ENCODE measurements at regions of chr2 and their contacts with region 1.

Region 1: DNA sequence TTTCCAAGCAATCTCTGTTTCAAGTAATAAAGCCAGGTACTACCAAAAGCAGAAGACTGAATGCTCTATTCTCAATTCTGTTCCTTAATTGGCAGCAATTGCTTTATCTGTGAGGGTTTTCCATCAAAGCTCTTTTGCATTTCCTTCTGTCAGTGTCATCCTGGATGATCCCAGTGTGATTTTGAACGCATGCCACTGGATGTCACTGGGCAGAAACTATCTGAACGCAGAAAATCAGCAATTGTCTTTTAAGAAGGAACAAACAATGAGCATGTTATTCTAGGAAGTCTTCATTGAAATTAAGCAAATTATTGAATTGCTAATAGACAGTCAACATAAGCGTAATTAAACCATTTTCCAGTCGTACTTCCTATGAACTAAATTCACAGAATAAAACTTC is 259.0 kb upstream of the REG3G start:
- DNase-seq: no peak
- H3K4me3 ChIP-seq: no peak overlapping the region
- H3K27ac ChIP-seq: no peak overlapping the region
- H3K4me1 ChIP-seq: no peaks in the 10 kb centered on the region
- H3K27me3 ChIP-seq: no peaks in the 10 kb centered on the region
- CTCF ChIP-seq: no peak

Region 2: GRCh38 chr2:78832481-78832880 is 66.0 kb after region 1 on chr2:
- CTCF ChIA-PET with region 1: no interaction called
- POLR2A ChIA-PET with region 1: no interaction called
- intact Hi-C with region 1: loop called (anchors 2 kb)
- DNase-seq: no peak
- H3K4me3 ChIP-seq: no peak overlapping the region
- H3K27ac ChIP-seq: no peak overlapping the region
- H3K4me1 ChIP-seq: no peaks in the 10 kb centered on the region
- H3K27me3 ChIP-seq: no peaks in the 10 kb centered on the region
- CTCF ChIP-seq: no peak

Region 3: DNA sequence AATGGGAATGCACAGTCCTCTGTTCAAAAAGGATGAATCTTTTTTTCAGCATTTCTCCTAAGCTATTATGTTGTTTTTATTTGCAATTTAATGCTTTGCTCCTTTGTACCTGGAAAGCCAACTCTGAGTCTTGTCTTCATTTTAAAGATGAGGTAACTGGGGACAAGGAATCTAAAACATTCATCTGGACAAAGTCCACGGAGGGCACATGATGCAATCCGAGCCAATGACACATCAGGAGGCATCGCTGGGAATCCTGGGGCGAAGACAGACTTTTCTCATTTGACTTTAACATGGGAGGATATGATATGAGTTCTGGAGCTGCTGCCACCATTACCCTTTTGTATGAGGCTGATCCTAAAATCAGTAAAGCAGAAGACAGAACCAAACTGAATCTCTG is 142.5 kb after region 1 on chr2:
- CTCF ChIA-PET with region 1: no interaction called
- POLR2A ChIA-PET with region 1: no interaction called
- intact Hi-C with region 1: no loop called
- DNase-seq: no peak
- H3K4me3 ChIP-seq: no peak overlapping the region
- H3K27ac ChIP-seq: no peak overlapping the region
- H3K4me1 ChIP-seq: no peaks in the 10 kb centered on the region
- H3K27me3 ChIP-seq: no peaks in the 10 kb centered on the region
- CTCF ChIP-seq: no peak